Right lobe of liver (tissue), 6 donors: ENCODE measurements at regions of chr16 and their contacts with region 1.

Region 1: GRCh38 chr16:11407047-11407982 is 62.1 kb downstream of the RMI2 start:
- DNase-seq: peak in 1 of 3 donors; percentile 67
- ATAC-seq: peak; percentile 80 to 90 (median 86)
- H3K4me3 ChIP-seq: no peak overlapping the region
- H3K27ac ChIP-seq: no peak overlapping the region
- H3K4me1 ChIP-seq: no peaks in the 10 kb centered on the region
- H3K27me3 ChIP-seq: no peaks in the 10 kb centered on the region
- CTCF ChIP-seq: peak; percentile 65 to 89 (median 76)
- POLR2A ChIP-seq: no peak

Region 2: DNA sequence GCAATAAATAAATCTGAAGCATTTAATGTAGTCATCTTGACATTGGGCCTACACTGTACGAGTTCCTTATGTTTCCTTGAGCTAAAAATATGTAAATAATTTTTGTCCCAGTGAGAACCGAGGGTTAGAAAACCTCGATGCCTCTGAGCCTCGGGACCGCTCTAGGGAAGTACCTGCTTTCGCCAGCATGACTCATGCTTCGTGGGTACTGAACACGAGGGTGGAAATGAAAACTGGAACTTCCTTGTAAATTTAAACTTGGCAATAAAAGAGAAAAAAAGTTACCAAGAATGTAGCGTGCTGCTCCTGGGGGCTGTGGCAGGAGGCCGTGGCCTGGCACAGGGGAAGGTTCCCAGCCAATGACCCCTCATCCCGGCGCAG is 225.4 kb before region 1 on chr16:
- intact Hi-C with region 1: no loop called
- DNase-seq: no peak
- ATAC-seq: peak; percentile 9 to 45 (median 39)
- H3K4me3 ChIP-seq: no peak overlapping the region
- H3K27ac ChIP-seq: no peak overlapping the region
- H3K4me1 ChIP-seq: no peaks in the 10 kb centered on the region
- H3K27me3 ChIP-seq: no peaks in the 10 kb centered on the region
- CTCF ChIP-seq: no peak
- POLR2A ChIP-seq: no peak

Region 3: GRCh38 chr16:11510178-11510973 is 103.1 kb after region 1 on chr16:
- intact Hi-C with region 1: loop called in 1 of 2 experiments (anchors 10 kb)
- DNase-seq: no peak
- ATAC-seq: no peak
- H3K4me3 ChIP-seq: no peak overlapping the region
- H3K27ac ChIP-seq: no peak overlapping the region
- H3K4me1 ChIP-seq: no peaks in the 10 kb centered on the region
- H3K27me3 ChIP-seq: no peaks in the 10 kb centered on the region
- CTCF ChIP-seq: no peak
- POLR2A ChIP-seq: no peak

Region 4: DNA sequence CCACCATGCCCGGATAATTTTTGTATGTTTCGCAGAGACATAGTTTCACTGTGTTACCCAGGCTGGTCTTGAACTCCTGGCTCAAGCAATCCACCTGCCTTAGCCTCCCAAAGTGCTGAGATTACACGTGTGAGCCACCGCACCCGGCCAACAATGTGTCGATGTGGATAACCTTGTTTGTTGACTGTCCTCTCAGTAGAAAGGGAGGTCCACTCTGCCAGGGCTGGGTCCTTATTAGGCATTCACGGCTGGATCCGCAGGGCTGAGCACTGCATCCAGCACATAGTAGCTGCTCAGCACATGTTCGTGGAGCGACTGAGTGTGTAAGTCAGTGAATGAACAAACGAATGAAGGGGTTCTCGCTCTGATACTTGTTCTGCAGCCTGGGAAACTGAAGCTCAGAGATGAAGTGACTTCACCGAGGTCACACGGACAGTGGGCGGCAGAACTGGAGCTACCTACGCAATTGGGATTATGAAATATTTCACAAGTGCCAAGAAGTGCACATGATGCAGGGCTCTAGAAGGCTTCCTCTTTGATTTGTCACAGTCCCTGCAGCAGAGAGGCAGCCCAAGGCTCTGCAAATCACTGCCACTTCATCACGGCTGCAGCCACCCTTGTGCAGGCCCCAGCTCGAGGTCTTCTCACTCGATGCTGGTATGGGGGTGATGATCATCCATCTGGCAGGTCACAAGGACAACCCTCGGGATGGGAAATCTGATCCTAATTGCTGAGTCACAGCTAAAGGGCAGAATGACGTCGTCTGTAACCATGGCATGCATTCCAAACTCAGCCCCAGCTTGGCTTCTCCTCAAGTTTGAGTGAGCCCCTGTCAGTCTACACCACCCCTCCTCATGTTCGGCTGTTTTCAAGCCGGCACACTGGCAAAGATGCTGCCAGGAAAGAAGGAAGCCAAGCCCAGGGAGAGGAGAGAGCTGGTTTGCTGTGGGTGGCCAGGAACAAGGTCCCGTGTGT is 232.9 kb after region 1 on chr16:
- intact Hi-C with region 1: loop called in 1 of 2 experiments (anchors 10 kb)
- DNase-seq: peak; percentile 78 to 91 (median 86)
- ATAC-seq: peak; percentile 80 to 91 (median 82)
- H3K4me3 ChIP-seq: no peak overlapping the region
- H3K27ac ChIP-seq: peak overlapping the region; percentile 92 to 97 (median 95)
- H3K4me1 ChIP-seq: peaks cover 0 to 17% (median 9%) of the 10 kb centered on the region in 4 donors
- H3K27me3 ChIP-seq: no peaks in the 10 kb centered on the region
- CTCF ChIP-seq: no peak
- POLR2A ChIP-seq: peak; percentile 77